Activated T-helper 2 cell treated with anti-CD3 and anti-CD28 coated beads, Interferon-gamma antibody, Interleukin-2, Interleukin-4, amounts not matched to agents 10 μg/mL and 5 μg/mL and 100 μg/mL, durations not matched to agents 14 hours and 24 hours and 36 hours (primary cell): ENCODE measurements at regions of chr7 and their contacts with region 1.

Region 1: DNA sequence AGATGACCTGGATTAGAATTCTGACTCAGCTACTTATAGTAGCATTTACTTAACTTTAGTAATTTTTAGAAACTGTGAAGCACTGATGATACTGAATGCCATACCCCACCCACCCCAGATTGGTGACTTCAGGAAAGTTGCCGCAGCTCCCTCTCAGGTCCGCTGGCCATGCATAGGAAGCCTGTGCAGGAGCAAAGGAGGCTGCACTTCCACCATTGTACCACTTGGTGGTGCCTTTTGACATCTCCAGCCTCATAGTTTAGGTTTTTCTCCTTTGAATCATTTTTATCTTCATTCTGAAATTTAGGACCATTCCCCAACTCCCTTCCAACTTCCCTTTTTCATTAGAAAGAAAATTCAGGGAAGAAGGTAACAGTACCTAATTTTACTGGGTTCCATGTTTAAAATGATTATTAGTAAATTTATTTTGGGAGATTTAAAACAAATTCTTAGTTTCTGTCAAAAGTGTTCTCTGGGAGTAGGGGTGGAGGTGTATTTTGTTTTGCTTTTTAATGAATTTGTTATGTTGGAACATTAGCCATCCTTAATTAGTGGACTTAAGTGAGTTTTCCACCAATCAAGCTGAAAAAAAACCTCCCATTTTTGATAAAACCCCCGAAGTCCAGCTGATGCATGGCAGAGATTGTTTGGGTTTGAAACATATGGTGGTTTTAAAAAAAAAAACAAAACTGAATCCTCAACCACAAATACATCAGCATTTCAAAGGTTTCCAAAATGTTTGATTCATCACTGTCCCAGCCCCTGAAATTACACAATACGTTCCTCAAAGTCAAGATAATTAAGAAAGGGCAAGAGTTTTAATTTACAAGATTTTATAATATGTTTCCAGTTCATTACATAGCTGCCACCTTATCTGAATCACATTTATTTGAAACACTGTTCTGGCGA is 109.6 kb downstream of the WNT2 start:
- DNase-seq: peak; percentile 16
- H3K4me3 Mint-ChIP-seq: no peak overlapping the region
- H3K27ac Mint-ChIP-seq: no peak overlapping the region
- H3K4me1 Mint-ChIP-seq: peaks cover 2% of the 10 kb centered on the region
- H3K27me3 Mint-ChIP-seq: no peaks in the 10 kb centered on the region

Region 2: DNA sequence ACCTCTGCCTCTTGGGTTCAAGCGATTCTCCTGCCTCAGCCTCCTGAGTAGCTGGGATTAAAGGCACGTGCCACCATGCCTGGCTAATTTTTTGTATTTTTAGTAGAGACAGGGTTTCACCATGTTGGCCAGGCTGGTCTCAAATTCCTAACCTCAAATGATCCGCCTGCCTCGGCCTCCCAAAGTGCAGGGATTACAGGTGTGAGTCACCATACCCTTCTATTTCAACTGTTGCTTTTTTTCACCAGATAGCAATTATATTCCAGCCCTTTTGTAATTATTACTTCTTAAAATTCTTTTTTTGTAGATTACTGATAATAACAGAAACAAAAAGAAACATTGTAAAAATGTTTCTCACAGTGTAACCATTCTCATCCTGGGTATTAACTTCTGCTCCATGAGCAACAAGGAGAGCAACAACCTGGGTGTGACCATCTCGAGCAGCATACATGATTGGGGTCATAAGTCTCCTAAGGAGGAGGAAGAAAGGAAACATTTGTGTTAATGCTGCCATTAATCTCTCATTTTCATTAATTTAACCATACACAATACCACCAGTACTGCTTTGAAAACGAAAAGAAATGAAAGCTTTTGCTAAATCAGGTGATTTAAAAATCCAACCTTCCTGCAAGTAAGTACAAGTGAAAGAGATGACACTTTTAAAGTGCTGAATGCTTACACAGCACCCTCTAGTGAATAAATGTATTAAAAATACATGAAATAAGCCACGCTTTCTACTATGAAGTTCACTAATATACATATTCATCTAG is 172.3 kb after region 1 on chr7:
- intact Hi-C with region 1: loop called (anchors 5 kb)
- DNase-seq: no peak
- H3K4me3 Mint-ChIP-seq: no peak overlapping the region
- H3K27ac Mint-ChIP-seq: no peak overlapping the region
- H3K4me1 Mint-ChIP-seq: no peaks in the 10 kb centered on the region
- H3K27me3 Mint-ChIP-seq: peaks cover 3% of the 10 kb centered on the region